AG04449 (cell line): ENCODE measurements at regions of chr2 and their contacts with region 1.

Region 1: DNA sequence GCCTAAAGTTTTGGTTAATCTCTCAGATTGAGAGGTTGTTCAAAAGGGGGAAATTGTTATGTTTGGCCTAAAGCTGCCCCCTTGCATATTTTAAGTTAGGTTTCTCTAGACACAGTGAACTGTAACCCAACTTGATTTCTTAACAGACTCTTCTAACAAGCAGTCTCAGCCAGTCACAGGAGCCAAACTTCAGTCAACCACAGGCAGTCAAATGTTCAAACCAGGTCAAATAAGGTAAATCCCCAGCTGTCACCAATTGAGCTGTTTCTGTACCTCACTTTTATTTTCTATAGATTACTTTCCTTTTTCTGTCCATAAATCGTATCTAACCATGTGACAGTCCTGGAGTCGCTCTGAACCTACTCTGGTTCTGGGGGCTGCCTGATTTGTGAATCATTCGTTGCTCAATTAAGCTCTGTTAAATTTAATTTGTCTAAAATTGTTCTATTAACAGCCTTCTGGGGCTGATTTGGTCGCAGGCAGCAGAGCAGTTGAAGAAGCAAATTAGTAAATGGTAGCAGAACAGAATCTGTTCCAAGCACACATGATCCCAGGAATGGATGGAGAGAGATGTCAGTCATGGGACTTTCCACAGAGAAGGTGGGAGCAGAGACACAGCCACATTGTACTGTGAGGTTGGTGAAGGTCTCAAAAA is 16.4 kb upstream of the NFU1 start:
- DNase-seq: no peak
- H3K4me3 ChIP-seq: no peak overlapping the region
- CTCF ChIP-seq: no peak

Region 2: GRCh38 chr2:69298261-69298660 is 155.3 kb before region 1 on chr2:
- CTCF ChIA-PET with region 1: no interaction called
- POLR2A ChIA-PET with region 1: no interaction called
- DNase-seq: peak; percentile 83
- H3K4me3 ChIP-seq: no peak overlapping the region
- CTCF ChIP-seq: no peak

Region 3: DNA sequence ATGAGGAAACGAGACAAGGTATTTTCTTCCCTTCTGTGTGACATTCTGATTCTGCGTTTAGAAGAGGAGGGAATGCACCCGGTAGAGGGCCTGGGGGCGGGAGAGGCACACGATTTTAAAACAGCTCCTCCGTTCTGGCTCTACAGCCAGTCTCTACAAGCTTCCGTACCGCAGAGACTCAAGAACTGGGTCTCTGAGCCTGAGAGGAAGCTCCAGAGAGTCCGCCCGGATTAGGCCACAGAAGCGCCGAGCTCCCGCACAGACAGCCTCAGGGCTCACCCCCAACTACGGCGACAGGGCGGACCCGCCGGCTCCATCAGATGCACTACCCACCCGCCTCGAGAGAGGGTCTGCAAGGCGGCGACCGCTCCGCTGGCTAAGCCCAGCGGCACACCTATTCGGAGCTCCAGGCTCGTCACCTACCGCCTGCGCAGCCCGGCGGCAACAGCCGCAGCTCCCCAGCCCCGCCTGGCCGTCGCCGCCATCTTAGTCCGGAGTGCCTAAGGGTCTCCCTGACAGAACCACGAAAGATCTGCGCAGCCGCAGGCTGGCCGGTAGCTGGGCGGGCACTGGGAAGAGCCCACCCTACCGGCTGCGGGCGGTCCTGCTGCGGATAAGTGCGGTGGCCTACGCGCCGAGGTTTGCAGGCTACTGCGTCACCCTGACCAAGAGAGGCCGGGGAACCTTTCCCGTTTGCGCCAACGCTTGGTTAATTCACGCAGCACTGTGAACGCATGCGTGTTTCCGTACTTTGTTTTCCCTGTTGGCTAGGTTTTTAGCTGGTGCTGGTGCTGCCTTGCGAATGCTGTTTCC is 16.5 kb before region 1 on chr2 and contains the start of gene NFU1:
- CTCF ChIA-PET with region 1: interaction called, 19 read pairs
- POLR2A ChIA-PET with region 1: no interaction called
- DNase-seq: peak; percentile 79
- H3K4me3 ChIP-seq: peak within 1 kb of the TSS; percentile 95
- CTCF ChIP-seq: peak; percentile 91